T-cell (primary cell): ENCODE measurements at regions of chr5 and their contacts with region 1.

Region 1: DNA sequence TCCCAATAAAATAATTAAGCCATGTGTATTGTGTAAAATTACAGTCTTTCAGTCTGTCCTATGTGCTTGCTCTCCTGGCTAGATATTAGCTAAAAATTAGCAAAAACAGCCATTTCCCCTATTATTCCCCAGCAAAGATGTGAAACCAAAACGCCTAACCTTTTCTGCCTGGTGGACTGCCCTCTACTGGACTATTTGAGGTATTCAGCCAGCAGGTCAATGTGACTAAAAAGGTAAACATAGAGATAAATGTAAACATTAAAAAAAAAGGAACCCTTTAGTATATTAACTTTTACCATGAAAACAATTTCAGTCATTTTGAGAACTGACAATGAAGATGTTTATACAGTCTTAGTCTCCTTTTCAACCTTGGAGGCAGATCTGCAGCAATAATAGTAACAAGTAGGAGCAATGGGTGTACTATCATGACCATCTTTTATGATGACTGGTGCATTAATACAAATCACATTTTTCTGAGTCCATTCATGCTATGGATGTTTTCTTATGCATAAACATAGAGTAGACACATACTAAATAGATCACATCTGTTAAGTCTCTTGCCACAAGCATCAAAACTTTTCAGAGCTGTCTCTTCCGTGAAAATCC is 10.1 kb downstream of the ATG12 start:
- DNase-seq: peak in 5 of 35 experiments; percentile 15 to 64 (median 20)
- ATAC-seq: peak in 3 of 4 experiments; percentile 33 to 61 (median 55)
- H3K4me3 ChIP-seq: no peak overlapping the region
- H3K4me3 Mint-ChIP-seq: no peak overlapping the region
- H3K27ac ChIP-seq: no peak overlapping the region
- H3K27ac Mint-ChIP-seq: peak overlapping the region in 1 of 2 donors; percentile 4
- H3K4me1 ChIP-seq: no peaks in the 10 kb centered on the region
- H3K4me1 Mint-ChIP-seq: peaks cover 9 to 21% (median 10%) of the 10 kb centered on the region in 3 donors
- H3K27me3 ChIP-seq: no peaks in the 10 kb centered on the region
- H3K27me3 Mint-ChIP-seq: no peaks in the 10 kb centered on the region

Region 2: GRCh38 chr5:116062352-116062751 is 231.1 kb after region 1 on chr5:
- CTCF ChIA-PET with region 1: interaction called in 1 of 2 experiments, 10 read pairs
- POLR2A ChIA-PET with region 1: no interaction called
- DNase-seq: no peak
- ATAC-seq: no peak
- H3K4me3 ChIP-seq: no peak overlapping the region
- H3K4me3 Mint-ChIP-seq: no peak overlapping the region
- H3K27ac ChIP-seq: no peak overlapping the region
- H3K27ac Mint-ChIP-seq: no peak overlapping the region
- H3K4me1 ChIP-seq: no peaks in the 10 kb centered on the region
- H3K4me1 Mint-ChIP-seq: no peaks in the 10 kb centered on the region
- H3K27me3 ChIP-seq: peaks cover 0 to 6% of the 10 kb centered on the region in 2 experiments
- H3K27me3 Mint-ChIP-seq: peaks cover 28 to 31% of the 10 kb centered on the region in 2 donors

Region 3: DNA sequence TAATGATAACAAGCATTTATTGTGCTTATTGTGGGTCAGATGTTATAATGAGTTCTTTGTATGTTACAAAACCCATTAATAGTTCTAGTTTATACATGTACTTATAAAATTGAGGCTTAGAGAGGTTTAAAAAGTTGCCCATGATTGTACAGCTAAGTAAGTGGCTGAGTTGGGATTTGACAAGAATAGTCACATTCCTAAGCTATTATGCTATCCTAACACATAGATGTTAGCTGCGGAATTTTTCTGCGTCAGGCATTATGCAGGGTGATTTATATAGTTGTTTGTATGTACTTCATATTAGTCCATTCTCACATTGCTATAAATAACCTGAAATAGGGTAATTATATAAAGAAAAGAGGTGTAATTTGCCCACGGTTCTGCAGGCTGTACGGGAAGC is 266.0 kb after region 1 on chr5:
- CTCF ChIA-PET with region 1: no interaction called
- POLR2A ChIA-PET with region 1: no interaction called
- DNase-seq: no peak
- ATAC-seq: no peak
- H3K4me3 ChIP-seq: no peak overlapping the region
- H3K4me3 Mint-ChIP-seq: no peak overlapping the region
- H3K27ac ChIP-seq: no peak overlapping the region
- H3K27ac Mint-ChIP-seq: no peak overlapping the region
- H3K4me1 ChIP-seq: no peaks in the 10 kb centered on the region
- H3K4me1 Mint-ChIP-seq: peaks cover 0 to 12% (median 3%) of the 10 kb centered on the region in 3 donors
- H3K27me3 ChIP-seq: no peaks in the 10 kb centered on the region
- H3K27me3 Mint-ChIP-seq: no peaks in the 10 kb centered on the region